ENCODE measurements at regions of chr12 and their contacts with region 1.

Region 1: GRCh38 chr12:65306366-65307168 is 28.1 kb downstream of the MSRB3 start:
- DNase-seq: peak; percentile 81

Region 2: GRCh38 chr12:66107451-66107915 is 800.9 kb after region 1 on chr12:
- in situ Hi-C with region 1: loop called (anchors 25 kb)
- DNase-seq: peak; percentile 92